ENCODE measurements at regions of chr7 and their contacts with region 1.

Region 1: DNA sequence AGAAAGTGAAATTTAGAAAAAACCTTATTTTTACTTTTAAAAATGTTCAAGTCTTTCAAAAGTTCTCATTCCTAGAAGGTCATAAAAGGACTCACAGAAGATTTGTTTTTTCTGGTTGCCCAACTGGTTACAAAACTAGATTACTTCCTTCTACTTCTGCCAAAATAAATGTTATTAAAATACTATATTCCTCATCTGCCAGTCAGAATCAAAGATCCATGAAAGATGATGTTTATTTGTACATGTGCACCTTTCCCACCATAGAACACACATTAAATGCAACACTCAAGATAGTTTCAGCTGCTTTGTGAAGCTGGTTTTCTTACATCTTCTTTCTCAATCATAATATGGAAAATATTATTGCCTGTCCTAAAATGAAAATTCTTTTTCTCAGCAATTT is 465.4 kb downstream of the ETV1 start:
- DNase-seq: no peak
- H3K4me3 ChIP-seq: no peak overlapping the region
- H3K27ac ChIP-seq: no peak overlapping the region
- H3K27me3 ChIP-seq: no peaks in the 10 kb centered on the region
- CTCF ChIP-seq: no peak

Region 2: DNA sequence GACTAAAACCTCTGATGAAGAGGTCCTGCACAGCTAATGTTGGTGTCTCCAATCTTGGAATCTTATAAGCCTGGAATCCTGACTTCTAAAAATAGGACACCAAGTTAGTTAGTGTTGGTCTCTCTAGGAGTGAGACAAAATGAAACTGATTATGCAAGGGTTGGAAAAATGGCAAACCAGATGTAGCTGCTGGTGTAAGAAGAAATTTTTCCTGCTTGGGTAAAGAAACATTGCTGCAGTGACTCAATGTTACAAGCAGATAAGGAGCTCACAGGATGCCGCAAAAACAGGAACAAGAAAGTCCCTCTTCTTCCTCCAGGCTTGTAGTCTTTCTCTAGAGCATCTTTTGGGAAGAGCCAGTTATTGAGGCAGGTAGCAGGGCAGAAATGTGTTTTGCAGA is 16.4 kb after region 1 on chr7:
- CTCF ChIA-PET with region 1: interaction called, 28 read pairs
- POLR2A ChIA-PET with region 1: no interaction called
- DNase-seq: peak; percentile 24
- H3K4me3 ChIP-seq: no peak overlapping the region
- H3K27ac ChIP-seq: no peak overlapping the region
- H3K27me3 ChIP-seq: no peaks in the 10 kb centered on the region
- CTCF ChIP-seq: no peak

Region 3: DNA sequence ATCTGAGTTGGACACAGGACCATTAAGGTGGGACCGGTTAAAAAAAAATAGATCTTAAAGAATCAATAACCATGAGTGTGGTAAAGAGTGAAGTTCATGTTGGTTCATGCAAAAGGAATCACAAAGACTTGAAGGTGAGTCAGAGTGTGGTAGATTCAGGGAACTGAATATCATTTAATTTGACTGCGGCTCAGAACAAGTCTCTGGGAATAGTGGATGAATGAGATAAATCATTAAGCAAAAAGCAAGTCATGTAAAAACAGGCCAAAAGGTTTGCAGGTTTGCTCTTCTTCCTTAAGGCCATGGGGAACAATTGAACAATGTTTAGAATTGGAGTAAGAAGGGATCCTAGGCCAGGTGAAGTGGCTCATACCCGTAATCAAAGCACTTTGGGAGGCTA is 79.6 kb after region 1 on chr7:
- CTCF ChIA-PET with region 1: interaction called, 11 read pairs
- POLR2A ChIA-PET with region 1: no interaction called
- DNase-seq: no peak
- H3K4me3 ChIP-seq: no peak overlapping the region
- H3K27ac ChIP-seq: no peak overlapping the region
- H3K27me3 ChIP-seq: no peaks in the 10 kb centered on the region
- CTCF ChIP-seq: no peak

Region 4: DNA sequence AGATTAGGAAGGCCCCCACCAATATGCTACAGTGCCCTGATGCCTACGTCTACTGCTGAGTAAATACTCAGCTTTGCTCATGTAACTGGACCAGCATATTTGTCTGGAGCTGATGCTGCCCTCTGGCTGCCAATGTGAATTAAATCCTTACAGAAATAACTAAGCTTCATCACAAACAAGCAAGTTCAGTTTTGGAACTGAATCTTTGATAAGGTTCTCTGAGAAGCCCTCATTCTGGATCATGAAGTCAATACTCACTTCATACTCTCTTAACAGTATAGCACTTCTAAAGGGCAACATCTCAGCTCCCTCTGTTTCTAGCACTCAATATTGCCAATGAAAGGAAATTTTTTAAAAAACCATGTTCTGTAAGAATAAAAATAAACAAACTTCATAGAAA is 218.7 kb after region 1 on chr7:
- CTCF ChIA-PET with region 1: interaction called, 14 read pairs
- POLR2A ChIA-PET with region 1: interaction called, 3 read pairs
- DNase-seq: peak; percentile 20
- H3K4me3 ChIP-seq: no peak overlapping the region
- H3K27ac ChIP-seq: no peak overlapping the region
- H3K27me3 ChIP-seq: no peaks in the 10 kb centered on the region
- CTCF ChIP-seq: peak; percentile 55

Region 5: GRCh38 chr7:14457568-14458453 is 933.7 kb after region 1 on chr7:
- CTCF ChIA-PET with region 1: interaction called, 30 read pairs
- POLR2A ChIA-PET with region 1: no interaction called
- DNase-seq: peak; percentile 70
- H3K4me3 ChIP-seq: no peak overlapping the region
- H3K27ac ChIP-seq: no peak overlapping the region
- H3K27me3 ChIP-seq: no peaks in the 10 kb centered on the region
- CTCF ChIP-seq: peak; percentile 92